GM12878 (cell line): ENCODE measurements at regions of chr9 and their contacts with region 1.

Region 1: GRCh38 chr9:127785023-127785932 is 556 bp upstream of the CDK9 start:
- DNase-seq: no peak
- ATAC-seq: peak; percentile 59
- H3K4me3 ChIP-seq: peak overlapping the region; percentile 85
- H3K27ac ChIP-seq: peak overlapping the region; percentile 82
- H3K4me1 ChIP-seq: peaks cover 41% of the 10 kb centered on the region
- H3K27me3 ChIP-seq: no peaks in the 10 kb centered on the region
- CTCF ChIP-seq: peak; percentile 65 to 89 (median 82)
- EP300 ChIP-seq: no peak
- POLR2A ChIP-seq: peak; percentile 44
- RAD21 ChIP-seq: peak; percentile 78

Region 2: GRCh38 chr9:127723450-127723849 is 61.8 kb before region 1 on chr9:
- CTCF ChIA-PET with region 1: no interaction called
- POLR2A ChIA-PET with region 1: no interaction called
- RAD21 ChIA-PET with region 1: no interaction called
- SMC1A ChIA-PET with region 1: no interaction called
- in situ Hi-C with region 1: no loop called
- intact Hi-C with region 1: no loop called
- DNase-seq: no peak
- ATAC-seq: no peak
- H3K4me3 ChIP-seq: no peak overlapping the region
- H3K27ac ChIP-seq: no peak overlapping the region
- H3K4me1 ChIP-seq: no peaks in the 10 kb centered on the region
- H3K27me3 ChIP-seq: no peaks in the 10 kb centered on the region
- CTCF ChIP-seq: no peak
- EP300 ChIP-seq: no peak
- POLR2A ChIP-seq: no peak
- RAD21 ChIP-seq: no peak

Region 3: DNA sequence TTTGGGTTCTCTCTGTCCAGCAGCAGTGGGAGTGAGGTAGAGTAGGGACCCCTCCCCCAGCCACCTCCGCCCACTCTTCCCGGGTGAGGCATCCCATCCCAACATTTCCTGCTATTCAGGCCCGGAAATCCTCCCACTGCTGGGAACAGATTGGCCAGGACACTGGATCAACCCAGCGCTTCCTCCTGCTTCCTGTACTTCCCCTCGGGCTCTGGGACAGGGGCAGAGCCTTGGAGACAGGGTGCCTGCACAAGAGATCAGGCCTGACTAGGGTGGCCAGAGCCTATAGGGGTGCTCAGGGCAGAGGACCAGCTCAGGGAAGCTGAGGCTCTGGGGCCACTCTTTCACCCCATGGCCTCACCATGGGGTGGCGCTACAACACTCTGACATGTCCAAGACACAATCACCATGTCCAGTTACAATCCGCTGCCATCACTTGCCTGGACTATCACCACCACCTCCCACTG is 21.3 kb before region 1 on chr9:
- CTCF ChIA-PET with region 1: interaction called, 75 read pairs
- POLR2A ChIA-PET with region 1: interaction called, 42 read pairs
- RAD21 ChIA-PET with region 1: interaction called, 61 read pairs
- SMC1A ChIA-PET with region 1: interaction called, 6 read pairs
- in situ Hi-C with region 1: no loop called
- intact Hi-C with region 1: loop called (anchors 1 kb)
- DNase-seq: no peak
- ATAC-seq: peak; percentile 78
- H3K4me3 ChIP-seq: no peak overlapping the region
- H3K27ac ChIP-seq: no peak overlapping the region
- H3K4me1 ChIP-seq: peaks cover 7% of the 10 kb centered on the region
- H3K27me3 ChIP-seq: no peaks in the 10 kb centered on the region
- CTCF ChIP-seq: peak; percentile 31 to 47 (median 45); a peak in 5 of 6 replicates
- EP300 ChIP-seq: no peak
- POLR2A ChIP-seq: no peak
- RAD21 ChIP-seq: peak; percentile 46

Region 4: DNA sequence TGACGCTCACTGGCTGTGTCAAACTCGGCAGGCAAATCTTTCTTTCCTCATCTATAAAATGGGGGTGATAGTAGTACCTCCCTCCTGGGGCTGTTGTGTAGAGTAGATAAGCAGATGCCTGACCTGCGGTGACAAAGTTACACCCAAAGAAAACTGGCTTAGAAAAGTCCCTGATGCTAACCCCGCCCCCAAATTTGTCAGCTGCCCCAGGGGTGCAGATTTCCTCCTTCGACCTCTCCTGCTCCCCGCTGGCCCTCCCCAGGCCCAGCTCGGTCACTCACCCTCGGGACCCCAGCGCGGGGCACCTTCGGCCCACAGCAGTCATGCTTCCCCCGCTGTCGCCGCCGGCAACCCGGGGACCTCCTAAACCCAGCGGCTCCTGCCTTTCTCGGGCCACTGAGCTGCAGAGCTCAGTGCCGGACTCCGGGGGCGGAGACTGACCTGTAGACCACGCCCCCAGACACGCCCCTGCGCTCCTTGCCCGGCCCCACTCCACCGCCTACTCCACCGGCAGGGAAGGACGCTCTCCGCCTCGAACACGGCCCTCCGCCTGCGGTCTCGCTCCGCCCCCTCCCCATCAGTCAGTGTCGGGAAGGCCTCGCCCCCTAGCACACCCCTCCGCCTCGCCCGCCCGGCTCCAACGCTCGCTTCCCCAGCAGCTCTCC is 14.2 kb before region 1 on chr9:
- CTCF ChIA-PET with region 1: interaction called, 75 read pairs
- POLR2A ChIA-PET with region 1: interaction called, 42 read pairs
- RAD21 ChIA-PET with region 1: interaction called, 61 read pairs
- SMC1A ChIA-PET with region 1: interaction called, 26 read pairs
- in situ Hi-C with region 1: no loop called
- intact Hi-C with region 1: no loop called
- DNase-seq: peak; percentile 90
- ATAC-seq: peak; percentile 95
- H3K4me3 ChIP-seq: peak overlapping the region; percentile 79
- H3K27ac ChIP-seq: peak overlapping the region; percentile 23; the same call in 1 of the 2 replicates
- H3K4me1 ChIP-seq: peaks cover 24% of the 10 kb centered on the region
- H3K27me3 ChIP-seq: no peaks in the 10 kb centered on the region
- CTCF ChIP-seq: no peak
- EP300 ChIP-seq: no peak
- POLR2A ChIP-seq: peak; percentile 78
- RAD21 ChIP-seq: no peak